CD4-positive, alpha-beta memory T cell (primary cell): ENCODE measurements at regions of chr12 and their contacts with region 1.

Region 1: GRCh38 chr12:50111693-50112455 is at the start of gene COX14:
- DNase-seq: peak; percentile 98 to 100 (median 100)
- H3K4me3 ChIP-seq: peak within 1 kb of the TSS; percentile 98 to 99
- H3K4me3 Mint-ChIP-seq: peak within 1 kb of the TSS; percentile 93 to 100 (median 96)
- H3K27ac ChIP-seq: peak within 1 kb of the TSS; percentile 93
- H3K27ac Mint-ChIP-seq: peak within 1 kb of the TSS; percentile 93 to 100 (median 98)
- H3K4me1 ChIP-seq: peaks cover 43% of the 10 kb centered on the region
- H3K4me1 Mint-ChIP-seq: peaks cover 18 to 50% (median 35%) of the 10 kb centered on the region in 4 donors
- H3K27me3 ChIP-seq: no peaks in the 10 kb centered on the region
- H3K27me3 Mint-ChIP-seq: peaks cover 0 to 1% of the 10 kb centered on the region in 2 donors
- total RNA-seq, gene COX14: 53.3 to 61.6 TPM

Region 2: GRCh38 chr12:50066433-50066832 is 45.4 kb before region 1 on chr12:
- CTCF ChIA-PET with region 1: interaction called, 17 read pairs
- POLR2A ChIA-PET with region 1: no interaction called
- intact Hi-C with region 1: no loop called
- DNase-seq: no peak
- H3K4me3 ChIP-seq: no peak overlapping the region
- H3K4me3 Mint-ChIP-seq: no peak overlapping the region
- H3K27ac ChIP-seq: no peak overlapping the region
- H3K27ac Mint-ChIP-seq: no peak overlapping the region
- H3K4me1 ChIP-seq: no peaks in the 10 kb centered on the region
- H3K4me1 Mint-ChIP-seq: peaks cover 4 to 9% (median 6%) of the 10 kb centered on the region in 4 donors
- H3K27me3 ChIP-seq: no peaks in the 10 kb centered on the region
- H3K27me3 Mint-ChIP-seq: peaks cover 9 to 17% of the 10 kb centered on the region in 2 donors

Region 3: GRCh38 chr12:50127546-50127945 is 15.7 kb after region 1 on chr12:
- CTCF ChIA-PET with region 1: interaction called, 58 read pairs
- POLR2A ChIA-PET with region 1: interaction called, 35 read pairs
- intact Hi-C with region 1: loop called (anchors 2 kb)
- DNase-seq: no peak
- H3K4me3 ChIP-seq: no peak overlapping the region
- H3K4me3 Mint-ChIP-seq: no peak overlapping the region
- H3K27ac ChIP-seq: no peak overlapping the region
- H3K27ac Mint-ChIP-seq: peak overlapping the region in 3 of 7 donors; percentile 43 to 84 (median 45)
- H3K4me1 ChIP-seq: peaks cover 3% of the 10 kb centered on the region
- H3K4me1 Mint-ChIP-seq: peaks cover 20 to 36% (median 25%) of the 10 kb centered on the region in 4 donors
- H3K27me3 ChIP-seq: no peaks in the 10 kb centered on the region
- H3K27me3 Mint-ChIP-seq: no peaks in the 10 kb centered on the region

Region 4: GRCh38 chr12:50167041-50167828 is 55.4 kb after region 1 on chr12 and contains the start of gene CERS5:
- CTCF ChIA-PET with region 1: interaction called, 131 read pairs
- POLR2A ChIA-PET with region 1: interaction called, 112 read pairs
- intact Hi-C with region 1: loop called (anchors 1 kb)
- DNase-seq: peak; percentile 97 to 98 (median 97)
- H3K4me3 ChIP-seq: peak within 1 kb of the TSS; percentile 72 to 81
- H3K4me3 Mint-ChIP-seq: peak within 1 kb of the TSS; percentile 93 to 96 (median 94)
- H3K27ac ChIP-seq: peak within 1 kb of the TSS; percentile 90
- H3K27ac Mint-ChIP-seq: peak within 1 kb of the TSS; percentile 88 to 98 (median 96)
- H3K4me1 ChIP-seq: peaks cover 30% of the 10 kb centered on the region
- H3K4me1 Mint-ChIP-seq: peaks cover 19 to 34% (median 26%) of the 10 kb centered on the region in 4 donors
- H3K27me3 ChIP-seq: no peaks in the 10 kb centered on the region
- H3K27me3 Mint-ChIP-seq: no peaks in the 10 kb centered on the region
- total RNA-seq, gene CERS5: 42.1 to 48.2 TPM

Region 5: DNA sequence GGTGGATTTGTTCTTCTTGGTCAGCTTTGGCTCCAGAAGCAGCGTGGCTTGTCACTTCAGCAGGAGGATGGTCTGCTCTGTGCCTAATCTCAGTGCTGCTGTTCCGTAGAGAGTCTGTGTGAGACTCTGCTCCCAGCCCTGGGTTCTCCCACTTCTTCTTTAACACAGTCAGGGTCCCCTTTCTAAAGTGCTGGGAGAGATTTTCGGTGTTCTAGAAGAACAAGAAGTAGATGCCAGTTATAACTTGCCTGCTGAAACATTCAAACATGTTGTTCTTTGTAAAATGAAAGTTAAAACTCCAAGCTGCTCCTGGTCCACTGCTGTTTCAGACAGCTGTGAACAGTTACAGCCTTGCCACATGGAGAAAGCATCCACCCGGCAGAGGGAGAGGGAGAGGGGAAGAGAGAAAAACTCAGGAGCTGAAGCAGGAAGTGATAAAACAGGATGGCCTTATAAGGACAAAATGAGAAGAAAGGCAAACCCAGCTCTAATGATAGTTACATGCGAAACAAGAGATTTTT is 110.5 kb after region 1 on chr12:
- CTCF ChIA-PET with region 1: interaction called, 12 read pairs
- POLR2A ChIA-PET with region 1: interaction called, 23 read pairs
- intact Hi-C with region 1: loop called (anchors 5 kb)
- DNase-seq: peak; percentile 30 to 43 (median 32)
- H3K4me3 ChIP-seq: peak overlapping the region; percentile 68 to 81
- H3K4me3 Mint-ChIP-seq: no peak overlapping the region
- H3K27ac ChIP-seq: peak overlapping the region; percentile 75
- H3K27ac Mint-ChIP-seq: no peak overlapping the region
- H3K4me1 ChIP-seq: peaks cover 41% of the 10 kb centered on the region
- H3K4me1 Mint-ChIP-seq: peaks cover 24 to 29% (median 27%) of the 10 kb centered on the region in 4 donors
- H3K27me3 ChIP-seq: no peaks in the 10 kb centered on the region
- H3K27me3 Mint-ChIP-seq: no peaks in the 10 kb centered on the region